ENCODE measurements at regions of chr9 and their contacts with region 1.

Region 1: GRCh38 chr9:111375817-111376564 is 46.0 kb upstream of the OR2K2 start:
- DNase-seq: no peak
- ATAC-seq: no peak
- H3K4me3 ChIP-seq: no peak overlapping the region
- H3K27ac ChIP-seq: no peak overlapping the region
- H3K4me1 ChIP-seq: no peaks in the 10 kb centered on the region
- H3K27me3 ChIP-seq: no peaks in the 10 kb centered on the region
- CTCF ChIP-seq: no peak

Region 2: GRCh38 chr9:113192455-113192854 is 1816.5 kb after region 1 on chr9:
- intact Hi-C with region 1: loop called in 1 of 2 experiments (anchors 10 kb)
- DNase-seq: no peak
- ATAC-seq: no peak
- H3K4me3 ChIP-seq: no peak overlapping the region
- H3K27ac ChIP-seq: no peak overlapping the region
- H3K4me1 ChIP-seq: no peaks in the 10 kb centered on the region
- H3K27me3 ChIP-seq: no peaks in the 10 kb centered on the region
- CTCF ChIP-seq: no peak